ENCODE measurements at regions of chr6 and their contacts with region 1.

Region 1: GRCh38 chr6:142692942-142693341 is 252.0 kb downstream of the HIVEP2 start:
- DNase-seq: peak; percentile 82
- H3K4me3 Mint-ChIP-seq: no peak overlapping the region
- H3K27ac Mint-ChIP-seq: no peak overlapping the region
- H3K4me1 Mint-ChIP-seq: peaks cover 43% of the 10 kb centered on the region
- H3K27me3 Mint-ChIP-seq: no peaks in the 10 kb centered on the region
- CTCF ChIP-seq: peak; percentile 85

Region 2: GRCh38 chr6:141734071-141734840 is 958.7 kb before region 1 on chr6:
- CTCF ChIA-PET with region 1: no interaction called
- POLR2A ChIA-PET with region 1: no interaction called
- intact Hi-C with region 1: no loop called
- DNase-seq: no peak
- H3K4me3 Mint-ChIP-seq: no peak overlapping the region
- H3K27ac Mint-ChIP-seq: no peak overlapping the region
- H3K4me1 Mint-ChIP-seq: no peaks in the 10 kb centered on the region
- H3K27me3 Mint-ChIP-seq: peaks cover 17% of the 10 kb centered on the region
- CTCF ChIP-seq: no peak

Region 3: DNA sequence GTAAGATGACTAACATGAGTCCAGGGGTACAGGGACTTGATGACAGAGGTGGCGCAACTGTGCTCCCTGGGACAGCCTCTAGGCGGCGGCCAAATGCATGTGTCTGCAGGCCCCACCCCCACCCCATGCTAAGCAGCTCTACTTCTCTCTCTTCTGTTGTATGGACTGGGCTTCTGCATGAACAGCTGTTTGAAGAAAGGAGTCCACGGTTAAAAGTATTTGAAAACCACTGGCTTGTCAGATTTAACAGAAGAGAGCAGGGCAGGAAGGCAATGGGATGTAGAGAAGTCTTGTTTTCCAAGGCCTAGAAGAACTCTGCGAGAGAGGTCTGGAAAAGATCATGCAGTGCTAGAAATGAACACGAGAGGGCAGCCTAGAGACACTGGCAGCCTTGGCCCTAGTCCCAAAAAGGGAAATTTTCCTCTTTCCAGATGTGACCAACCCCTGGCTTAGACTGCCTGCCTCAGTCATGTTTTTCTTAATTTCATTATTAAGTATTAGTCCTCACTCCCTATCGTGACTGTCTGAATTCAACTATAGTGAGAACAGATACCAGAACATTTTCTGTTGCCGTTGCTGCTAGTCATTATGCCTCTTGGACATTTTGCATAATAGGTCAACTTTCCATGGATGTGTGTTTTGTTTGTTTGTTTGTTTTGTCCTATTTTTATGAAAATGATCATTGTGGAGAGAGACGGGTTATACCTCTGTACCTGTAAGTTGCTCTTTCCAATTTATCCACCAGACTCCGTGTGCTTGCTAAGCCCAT is 126.1 kb before region 1 on chr6:
- CTCF ChIA-PET with region 1: interaction called, 3 read pairs
- POLR2A ChIA-PET with region 1: no interaction called
- intact Hi-C with region 1: loop called (anchors 2 kb)
- DNase-seq: peak; percentile 73
- H3K4me3 Mint-ChIP-seq: no peak overlapping the region
- H3K27ac Mint-ChIP-seq: no peak overlapping the region
- H3K4me1 Mint-ChIP-seq: peaks cover 27% of the 10 kb centered on the region
- H3K27me3 Mint-ChIP-seq: no peaks in the 10 kb centered on the region
- CTCF ChIP-seq: peak; percentile 76

Region 4: DNA sequence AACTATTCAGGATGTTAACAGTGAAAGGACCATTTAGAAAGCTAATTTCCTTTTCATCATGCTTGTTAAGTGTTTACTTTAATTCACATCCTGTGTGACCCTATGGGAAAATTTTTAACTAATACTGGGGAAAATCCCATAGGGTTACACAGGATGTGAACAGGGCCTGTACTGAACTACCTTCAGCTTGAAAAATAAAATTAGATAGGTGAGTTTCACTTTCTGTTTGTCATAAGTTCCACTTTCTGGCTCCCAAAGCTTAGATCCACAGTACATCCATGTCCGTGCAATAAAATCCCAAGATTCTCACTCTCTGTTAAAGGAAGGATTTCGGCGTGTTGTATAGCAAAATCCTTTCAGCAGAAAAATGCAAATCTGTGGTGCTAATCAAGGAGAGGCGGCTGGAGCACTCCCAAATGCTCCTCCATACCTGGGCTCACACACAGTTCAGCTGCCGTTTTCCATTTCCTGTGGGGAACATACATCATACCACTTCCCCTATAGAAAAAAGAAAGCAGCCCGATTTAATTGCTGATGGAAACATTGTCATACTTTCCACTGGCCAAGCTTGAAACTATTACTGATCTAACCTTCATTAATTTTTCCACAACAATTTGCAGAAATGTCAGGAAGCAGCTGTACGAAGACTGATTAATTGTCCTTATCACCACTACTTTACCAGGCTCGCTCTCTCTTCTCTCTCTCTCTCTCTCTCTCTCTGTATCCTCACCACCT is 126.8 kb after region 1 on chr6:
- CTCF ChIA-PET with region 1: no interaction called
- POLR2A ChIA-PET with region 1: no interaction called
- intact Hi-C with region 1: loop called (anchors 10 kb)
- DNase-seq: peak; percentile 49
- H3K4me3 Mint-ChIP-seq: peak overlapping the region; percentile 75
- H3K27ac Mint-ChIP-seq: peak overlapping the region; percentile 87
- H3K4me1 Mint-ChIP-seq: peaks cover 15% of the 10 kb centered on the region
- H3K27me3 Mint-ChIP-seq: no peaks in the 10 kb centered on the region
- CTCF ChIP-seq: no peak

Region 5: GRCh38 chr6:143026696-143027449 is 333.9 kb after region 1 on chr6:
- CTCF ChIA-PET with region 1: no interaction called
- POLR2A ChIA-PET with region 1: no interaction called
- intact Hi-C with region 1: loop called (anchors 2 kb)
- DNase-seq: peak; percentile 35
- H3K4me3 Mint-ChIP-seq: no peak overlapping the region
- H3K27ac Mint-ChIP-seq: no peak overlapping the region
- H3K4me1 Mint-ChIP-seq: no peaks in the 10 kb centered on the region
- H3K27me3 Mint-ChIP-seq: no peaks in the 10 kb centered on the region
- CTCF ChIP-seq: peak; percentile 11

Region 6: DNA sequence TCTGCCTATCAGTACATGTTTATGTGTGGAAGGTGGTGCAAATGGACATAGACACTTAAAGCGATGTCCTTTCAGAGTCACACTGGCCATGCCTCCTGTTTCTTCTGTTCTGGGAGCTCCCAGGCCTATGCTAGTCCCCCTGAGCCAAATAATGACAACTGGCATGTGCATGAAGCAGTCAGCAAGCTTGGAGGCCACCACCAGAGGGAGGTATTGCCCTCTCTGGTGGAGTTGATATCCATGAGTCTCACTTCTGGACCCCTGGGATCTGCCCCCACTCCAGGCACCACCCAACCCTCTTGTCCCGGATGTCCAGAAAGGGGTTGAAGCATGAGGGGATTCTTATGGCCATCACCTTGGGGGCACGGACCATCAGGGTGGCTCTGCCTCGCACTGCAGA is 539.9 kb after region 1 on chr6:
- CTCF ChIA-PET with region 1: interaction called, 11 read pairs
- POLR2A ChIA-PET with region 1: no interaction called
- intact Hi-C with region 1: loop called (anchors 5 kb)
- DNase-seq: peak; percentile 70
- H3K4me3 Mint-ChIP-seq: no peak overlapping the region
- H3K27ac Mint-ChIP-seq: peak overlapping the region; percentile 33
- H3K4me1 Mint-ChIP-seq: peaks cover 7% of the 10 kb centered on the region
- H3K27me3 Mint-ChIP-seq: no peaks in the 10 kb centered on the region
- CTCF ChIP-seq: peak; percentile 55

Region 7: GRCh38 chr6:143427109-143427817 is 734.3 kb after region 1 on chr6:
- CTCF ChIA-PET with region 1: interaction called, 7 read pairs
- POLR2A ChIA-PET with region 1: interaction called, 5 read pairs
- intact Hi-C with region 1: loop called (anchors 1 kb)
- DNase-seq: peak; percentile 78
- H3K4me3 Mint-ChIP-seq: no peak overlapping the region
- H3K27ac Mint-ChIP-seq: peak overlapping the region; percentile 84
- H3K4me1 Mint-ChIP-seq: peaks cover 11% of the 10 kb centered on the region
- H3K27me3 Mint-ChIP-seq: no peaks in the 10 kb centered on the region
- CTCF ChIP-seq: peak; percentile 98